GM10248 (cell line): ENCODE measurements at regions of chr3 and their contacts with region 1.

Region 1: GRCh38 chr3:112013058-112013783 is 14.5 kb downstream of the TAGLN3 start:
- DNase-seq: peak; percentile 66
- CTCF ChIP-seq: peak; percentile 76

Region 2: GRCh38 chr3:111668912-111669488 is 344.2 kb before region 1 on chr3:
- CTCF ChIA-PET with region 1: interaction called, 12 read pairs
- POLR2A ChIA-PET with region 1: no interaction called
- DNase-seq: peak; percentile 29
- CTCF ChIP-seq: peak; percentile 73

Region 3: GRCh38 chr3:111904376-111905241 is 108.6 kb before region 1 on chr3:
- CTCF ChIA-PET with region 1: no interaction called
- POLR2A ChIA-PET with region 1: no interaction called
- DNase-seq: no peak
- CTCF ChIP-seq: no peak

Region 4: DNA sequence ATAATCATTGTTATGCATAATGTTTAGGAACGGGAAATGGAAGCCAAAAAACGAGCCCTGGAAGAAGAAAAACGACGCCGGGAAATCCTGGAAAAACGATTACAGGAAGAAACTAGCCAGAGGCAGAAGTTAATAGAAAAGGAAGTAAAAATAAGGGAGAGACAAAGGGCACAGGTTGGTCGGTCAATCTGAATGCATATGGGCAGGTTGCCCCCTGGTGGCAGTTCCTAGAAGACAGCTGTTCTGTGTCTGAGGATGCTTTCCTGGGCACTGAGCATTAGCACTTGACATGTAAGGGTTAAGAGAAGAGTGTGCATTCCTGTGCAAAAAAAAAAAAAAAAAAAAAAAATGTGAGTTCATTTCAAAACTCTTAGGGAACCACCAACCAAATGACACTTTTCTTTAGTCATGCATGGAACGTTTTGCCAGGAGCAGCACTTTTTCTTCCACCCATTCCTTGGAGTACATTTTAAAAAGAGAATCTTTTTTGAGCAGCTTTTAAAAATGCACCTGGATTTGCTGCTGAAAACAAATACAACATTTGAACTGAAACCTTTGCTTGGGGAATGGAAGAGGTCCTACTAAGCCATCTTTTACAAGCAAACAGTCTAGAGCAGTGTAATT is 45.5 kb before region 1 on chr3:
- CTCF ChIA-PET with region 1: interaction called, 15 read pairs
- POLR2A ChIA-PET with region 1: no interaction called
- DNase-seq: peak; percentile 38
- CTCF ChIP-seq: peak; percentile 86

Region 5: DNA sequence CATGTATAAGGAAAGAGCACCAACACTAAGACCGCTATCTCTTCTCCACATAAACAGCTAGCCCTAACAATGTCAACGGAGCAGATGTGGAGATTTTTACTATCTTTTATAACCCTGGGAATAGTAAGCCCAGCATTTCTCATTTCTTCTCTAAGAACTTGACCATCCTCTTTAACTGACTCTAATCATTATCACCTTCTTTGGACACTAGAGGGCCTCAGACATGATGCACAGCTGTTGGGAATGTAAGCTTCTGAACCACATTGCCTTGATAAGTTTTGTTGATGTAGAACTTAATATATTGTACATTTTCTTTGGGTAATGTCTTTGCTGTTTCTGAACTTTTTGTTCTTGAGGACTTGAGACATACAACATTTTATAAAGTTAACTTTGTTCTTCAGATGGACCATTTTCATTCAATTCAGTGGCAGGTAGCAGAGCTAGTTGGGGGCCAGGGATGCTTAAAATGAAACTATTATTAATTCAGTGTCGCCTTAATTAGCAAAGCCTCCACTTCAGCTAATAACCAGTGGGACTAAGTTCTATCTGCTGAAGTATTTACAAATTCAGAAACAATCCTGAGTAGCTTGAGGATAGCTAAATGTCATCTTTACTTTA is 24.1 kb before region 1 on chr3:
- CTCF ChIA-PET with region 1: interaction called, 383 read pairs
- POLR2A ChIA-PET with region 1: no interaction called
- DNase-seq: peak; percentile 41
- CTCF ChIP-seq: peak; percentile 85

Region 6: DNA sequence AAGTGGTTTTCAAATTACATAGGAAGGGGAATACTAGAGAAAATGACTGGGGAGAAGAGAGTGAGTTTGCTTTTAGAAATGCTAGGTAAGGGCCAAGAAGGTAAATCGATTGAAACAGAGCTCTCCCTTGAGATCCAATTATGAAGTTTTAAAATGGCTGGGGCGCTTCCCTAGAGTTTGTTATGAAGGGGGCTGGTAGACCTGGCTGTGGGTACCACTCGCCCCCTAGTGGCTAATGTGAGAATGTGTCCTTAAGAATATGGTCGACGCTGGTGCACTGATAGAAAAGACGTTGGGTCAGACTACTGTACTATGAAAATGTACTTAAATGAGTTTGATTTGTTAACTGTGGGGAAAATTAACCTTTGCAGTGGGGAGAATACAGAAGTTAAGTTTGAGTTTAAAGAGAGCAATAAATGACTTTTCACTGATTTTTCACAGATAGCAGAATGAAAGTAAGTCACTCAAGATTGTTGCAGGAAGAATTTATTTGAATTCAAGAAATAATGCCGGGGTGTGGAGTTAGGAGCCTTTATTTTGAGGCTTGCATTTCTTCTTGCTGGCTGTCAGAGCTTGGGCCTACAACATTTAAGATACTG is 30.5 kb after region 1 on chr3:
- CTCF ChIA-PET with region 1: interaction called, 18 read pairs
- POLR2A ChIA-PET with region 1: no interaction called
- DNase-seq: peak; percentile 57
- CTCF ChIP-seq: peak; percentile 80